ENCODE measurements at regions of chr16 and their contacts with region 1.

Region 1: DNA sequence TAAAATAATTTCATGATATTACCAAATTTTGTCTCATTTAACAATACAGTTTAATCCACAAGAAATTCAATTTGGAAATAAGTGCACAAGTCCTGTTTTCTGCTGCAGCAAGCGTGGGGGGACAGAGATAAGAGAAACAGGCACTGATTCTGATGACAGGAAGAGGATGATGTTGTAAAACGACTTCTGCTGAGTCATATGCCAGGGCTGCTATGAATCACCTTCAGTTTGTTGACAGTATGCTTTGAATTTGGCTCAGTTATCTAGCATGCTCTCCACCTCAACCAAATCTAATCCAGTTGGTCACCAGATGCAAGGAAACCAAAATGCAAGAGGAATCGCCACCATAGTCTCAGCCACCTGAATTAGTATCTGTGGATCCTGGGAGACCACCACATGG is 244.1 kb upstream of the MON1B start:
- DNase-seq: no peak
- H3K4me3 ChIP-seq: no peak overlapping the region
- H3K27ac ChIP-seq: no peak overlapping the region
- H3K4me1 ChIP-seq: no peaks in the 10 kb centered on the region
- H3K27me3 ChIP-seq: no peaks in the 10 kb centered on the region
- CTCF ChIP-seq: no peak
- EP300 ChIP-seq: no peak
- POLR2A ChIP-seq: no peak

Region 2: GRCh38 chr16:77009453-77009852 is 62.6 kb after region 1 on chr16:
- in situ Hi-C with region 1: loop called in 1 of 4 experiments (anchors 10 kb)
- intact Hi-C with region 1: no loop called
- DNase-seq: no peak
- H3K4me3 ChIP-seq: no peak overlapping the region
- H3K27ac ChIP-seq: no peak overlapping the region
- H3K4me1 ChIP-seq: no peaks in the 10 kb centered on the region
- H3K27me3 ChIP-seq: no peaks in the 10 kb centered on the region
- CTCF ChIP-seq: no peak
- EP300 ChIP-seq: no peak
- POLR2A ChIP-seq: no peak

Region 3: DNA sequence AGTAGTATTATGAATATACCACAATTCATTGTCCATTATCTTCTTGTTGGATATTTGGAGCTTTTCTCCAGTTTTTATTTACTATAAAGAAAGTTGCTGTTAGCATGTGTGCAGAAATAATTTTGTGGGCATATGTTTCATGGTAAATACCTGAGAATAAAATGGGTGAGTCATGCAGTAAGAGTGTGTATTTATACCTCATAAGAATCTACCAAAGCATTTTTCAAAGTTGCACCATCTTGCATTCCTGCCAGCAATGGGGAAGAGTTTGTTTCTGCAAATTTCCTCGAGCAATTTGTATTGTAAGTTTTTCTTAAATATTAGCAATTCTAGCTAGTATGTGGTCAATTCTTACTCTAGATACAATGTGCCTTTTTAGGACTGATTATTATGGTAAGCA is 236.3 kb after region 1 on chr16:
- in situ Hi-C with region 1: no loop called
- intact Hi-C with region 1: no loop called
- DNase-seq: no peak
- H3K4me3 ChIP-seq: no peak overlapping the region
- H3K27ac ChIP-seq: no peak overlapping the region
- H3K4me1 ChIP-seq: no peaks in the 10 kb centered on the region
- H3K27me3 ChIP-seq: peaks cover 15% of the 10 kb centered on the region
- CTCF ChIP-seq: no peak
- EP300 ChIP-seq: no peak
- POLR2A ChIP-seq: no peak